Motor neuron (in vitro differentiated cells): ENCODE measurements at regions of chr6 and their contacts with region 1.

Region 1: DNA sequence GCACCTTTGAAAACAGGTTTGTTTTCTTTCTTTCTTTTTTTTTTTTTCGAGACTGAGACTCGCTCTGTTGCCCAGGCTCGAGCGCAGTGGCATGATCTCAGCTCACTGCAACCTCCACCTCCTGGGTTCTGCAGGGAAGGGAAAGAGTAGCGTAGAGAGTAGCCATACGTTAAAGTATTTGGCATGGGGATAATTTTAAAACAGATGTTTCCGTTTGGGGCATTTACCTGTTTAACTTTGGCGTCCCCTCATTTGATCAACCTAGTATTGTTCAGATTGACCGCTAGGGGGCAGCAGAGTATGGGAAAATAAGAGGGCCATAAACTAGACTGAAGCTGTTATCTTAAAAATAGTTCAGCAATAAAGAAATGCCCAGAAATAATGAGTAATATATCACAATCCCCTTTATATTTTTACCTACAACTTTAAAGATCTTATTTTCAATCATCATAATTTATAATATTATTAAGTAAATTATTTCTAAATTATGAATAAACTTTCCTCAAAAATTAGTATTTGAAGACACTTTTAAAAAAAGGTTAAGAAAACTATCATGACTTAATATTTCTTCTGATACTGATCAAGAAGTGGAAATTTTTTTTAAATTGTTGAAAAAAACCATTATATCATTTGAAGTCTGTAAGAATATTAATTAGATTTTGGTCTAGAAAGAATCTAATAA is 7.6 kb upstream of the TAAR9 start:
- ATAC-seq: peak; percentile 55 to 83 (median 65)
- H3K4me3 ChIP-seq: no peak overlapping the region
- H3K27ac ChIP-seq: no peak overlapping the region
- H3K4me1 ChIP-seq: no peaks in the 10 kb centered on the region

Region 2: GRCh38 chr6:132041706-132042105 is 488.7 kb before region 1 on chr6:
- in situ Hi-C with region 1: no loop called
- ATAC-seq: no peak
- H3K4me3 ChIP-seq: no peak overlapping the region
- H3K27ac ChIP-seq: no peak overlapping the region
- H3K4me1 ChIP-seq: no peaks in the 10 kb centered on the region

Region 3: DNA sequence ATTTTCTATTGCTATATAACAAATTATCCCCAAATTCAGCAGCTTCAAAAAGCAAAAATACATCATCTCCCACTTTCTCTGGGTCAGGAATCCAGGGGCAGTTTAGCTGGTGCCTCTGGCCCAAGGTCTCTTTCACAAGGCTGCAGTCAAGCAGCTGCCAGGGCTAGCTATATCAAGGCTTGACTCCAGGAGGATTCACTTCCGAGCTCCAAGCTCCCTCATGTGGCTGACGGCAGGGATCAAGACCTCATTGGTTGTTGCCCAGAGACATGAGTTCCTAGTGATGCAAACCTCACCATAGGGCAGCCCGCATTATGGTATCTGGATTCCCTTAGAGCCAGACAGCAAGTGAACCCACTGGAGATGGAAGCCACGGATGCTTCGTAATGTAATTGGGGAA is 184.8 kb after region 1 on chr6:
- in situ Hi-C with region 1: loop called in 1 of 9 experiments (anchors 25 kb)
- ATAC-seq: peak in 4 of 8 experiments; percentile 61 to 99 (median 96)
- H3K4me3 ChIP-seq: no peak overlapping the region
- H3K27ac ChIP-seq: no peak overlapping the region
- H3K4me1 ChIP-seq: no peaks in the 10 kb centered on the region

Region 4: GRCh38 chr6:132768051-132768517 is 237.7 kb after region 1 on chr6:
- in situ Hi-C with region 1: loop called in 1 of 9 experiments (anchors 25 kb)
- ATAC-seq: peak in 4 of 8 experiments; percentile 66 to 90 (median 84)
- H3K4me3 ChIP-seq: no peak overlapping the region
- H3K27ac ChIP-seq: no peak overlapping the region
- H3K4me1 ChIP-seq: no peaks in the 10 kb centered on the region

Region 5: DNA sequence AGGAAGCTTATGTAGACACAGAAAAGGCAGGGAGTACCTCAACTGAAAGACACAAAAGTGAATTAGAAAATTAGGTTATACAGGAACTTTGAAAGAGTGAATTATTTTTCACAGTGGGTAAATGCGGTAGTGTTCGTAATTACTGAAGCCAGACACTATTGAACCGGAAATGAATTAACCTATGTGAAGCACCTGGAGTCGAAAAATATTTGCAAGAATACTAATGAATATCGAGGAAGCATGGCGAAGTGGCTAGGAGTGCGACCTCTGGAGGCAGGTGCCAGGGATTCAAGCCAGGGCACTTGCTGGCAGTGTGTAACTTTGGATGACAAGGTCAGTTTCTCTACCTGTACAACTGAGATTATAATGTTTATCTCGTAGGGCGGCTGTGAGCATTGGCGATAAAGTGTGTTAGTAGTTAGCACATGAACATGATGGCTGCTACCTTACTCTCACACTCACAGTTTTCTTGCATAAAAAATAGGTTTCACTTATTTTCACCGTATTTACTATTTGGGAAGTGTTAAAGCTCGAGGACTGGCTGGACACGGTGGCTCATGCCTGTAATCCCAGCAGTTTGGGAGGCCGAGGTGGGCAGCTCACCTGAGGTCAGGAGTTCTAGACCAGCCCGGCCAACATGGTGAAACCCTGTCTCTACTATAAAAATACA is 268.6 kb after region 1 on chr6:
- in situ Hi-C with region 1: loop called in 2 of 9 experiments (anchors 25 kb)
- ATAC-seq: peak; percentile 63 to 84 (median 74)
- H3K4me3 ChIP-seq: peak overlapping the region; percentile 50 to 77 (median 61)
- H3K27ac ChIP-seq: peak overlapping the region; percentile 27 to 81
- H3K4me1 ChIP-seq: no peaks in the 10 kb centered on the region

Region 6: DNA sequence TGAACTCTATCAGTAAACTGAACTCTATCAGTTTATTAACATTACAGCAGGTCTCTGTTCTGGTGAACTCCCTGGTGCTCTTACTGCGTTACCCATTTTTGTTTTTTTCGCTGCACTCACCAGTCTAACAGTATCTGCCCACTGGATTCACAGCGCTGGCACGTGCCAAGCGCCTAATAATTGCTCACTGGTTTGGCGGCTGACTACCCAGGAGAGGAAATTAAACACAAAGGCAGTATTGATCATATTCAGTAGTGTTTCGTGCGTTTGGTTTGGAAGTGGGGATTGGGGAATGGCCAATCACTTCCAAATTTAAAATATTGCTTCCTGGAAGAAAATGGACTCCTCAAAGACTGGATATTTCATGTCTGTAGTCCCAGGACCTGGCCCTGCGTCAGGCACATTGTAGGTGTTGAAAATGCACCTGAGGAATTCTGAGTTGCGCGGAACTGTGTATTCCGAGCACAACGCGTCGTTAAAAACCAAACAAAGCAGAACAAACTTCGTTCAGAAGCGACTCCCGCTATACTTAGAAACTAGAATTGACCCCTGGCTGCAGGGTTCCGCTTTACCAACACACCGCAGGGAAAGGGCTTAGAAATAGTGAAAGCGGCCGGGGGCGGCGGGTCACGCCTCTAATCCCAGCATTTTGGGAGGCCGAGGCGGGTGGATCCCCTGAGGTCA is 282.9 kb after region 1 on chr6:
- in situ Hi-C with region 1: loop called in 1 of 9 experiments (anchors 25 kb)
- ATAC-seq: peak in 3 of 8 experiments; percentile 6 to 10 (median 6)
- H3K4me3 ChIP-seq: peak overlapping the region; percentile 73 to 91 (median 83)
- H3K27ac ChIP-seq: peak overlapping the region; percentile 63 to 91
- H3K4me1 ChIP-seq: peaks cover 24 to 27% of the 10 kb centered on the region in 2 donors

Region 7: DNA sequence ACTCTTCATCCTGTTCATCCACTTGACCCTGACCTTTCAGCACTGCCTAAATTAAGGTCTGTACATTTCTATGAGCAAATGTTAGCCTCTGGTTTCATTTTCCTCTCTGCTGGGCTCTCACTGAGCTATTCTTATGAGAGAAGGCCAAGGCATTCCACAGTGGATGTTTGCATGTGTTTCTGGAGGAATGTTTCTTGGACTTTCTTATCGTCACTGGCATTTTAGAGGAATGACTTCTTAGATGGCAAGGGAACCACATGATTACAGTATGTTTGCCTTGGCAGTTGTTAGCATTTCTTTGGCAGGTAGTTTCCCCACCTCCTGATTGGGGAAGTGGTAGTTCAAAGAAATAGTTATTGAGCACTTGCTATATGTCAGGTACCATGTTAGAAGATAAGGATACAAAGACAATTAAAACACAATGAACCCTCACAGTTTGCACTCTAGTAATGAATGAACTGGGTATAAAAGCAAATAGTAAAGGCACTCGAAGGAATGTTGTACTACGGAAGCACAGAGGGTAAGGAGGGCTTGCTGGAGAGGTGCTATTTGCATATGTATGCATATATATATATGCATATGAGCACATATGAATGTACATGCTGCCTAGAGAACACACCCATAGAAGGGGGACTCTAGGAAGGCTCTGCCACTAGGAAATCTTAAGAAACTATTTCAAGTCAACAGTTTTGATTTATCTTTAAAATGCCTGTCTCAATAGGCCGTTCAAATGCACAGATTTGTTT is 1018.2 kb after region 1 on chr6:
- in situ Hi-C with region 1: loop called in 1 of 9 experiments (anchors 25 kb)
- ATAC-seq: peak in 7 of 8 experiments; percentile 40 to 98 (median 67)
- H3K4me3 ChIP-seq: no peak overlapping the region
- H3K27ac ChIP-seq: no peak overlapping the region
- H3K4me1 ChIP-seq: peaks cover 12 to 15% of the 10 kb centered on the region in 2 donors